ENCODE measurements at regions of chr3 and their contacts with region 1.

Region 1: GRCh38 chr3:12994607-12995388 is 78.4 kb downstream of the IQSEC1 start:
- DNase-seq: peak; percentile 92
- CTCF ChIP-seq: peak; percentile 91

Region 2: GRCh38 chr3:12959838-12960378 is 34.9 kb before region 1 on chr3:
- CTCF ChIA-PET with region 1: interaction called, 163 read pairs
- POLR2A ChIA-PET with region 1: no interaction called
- DNase-seq: no peak
- CTCF ChIP-seq: no peak

Region 3: DNA sequence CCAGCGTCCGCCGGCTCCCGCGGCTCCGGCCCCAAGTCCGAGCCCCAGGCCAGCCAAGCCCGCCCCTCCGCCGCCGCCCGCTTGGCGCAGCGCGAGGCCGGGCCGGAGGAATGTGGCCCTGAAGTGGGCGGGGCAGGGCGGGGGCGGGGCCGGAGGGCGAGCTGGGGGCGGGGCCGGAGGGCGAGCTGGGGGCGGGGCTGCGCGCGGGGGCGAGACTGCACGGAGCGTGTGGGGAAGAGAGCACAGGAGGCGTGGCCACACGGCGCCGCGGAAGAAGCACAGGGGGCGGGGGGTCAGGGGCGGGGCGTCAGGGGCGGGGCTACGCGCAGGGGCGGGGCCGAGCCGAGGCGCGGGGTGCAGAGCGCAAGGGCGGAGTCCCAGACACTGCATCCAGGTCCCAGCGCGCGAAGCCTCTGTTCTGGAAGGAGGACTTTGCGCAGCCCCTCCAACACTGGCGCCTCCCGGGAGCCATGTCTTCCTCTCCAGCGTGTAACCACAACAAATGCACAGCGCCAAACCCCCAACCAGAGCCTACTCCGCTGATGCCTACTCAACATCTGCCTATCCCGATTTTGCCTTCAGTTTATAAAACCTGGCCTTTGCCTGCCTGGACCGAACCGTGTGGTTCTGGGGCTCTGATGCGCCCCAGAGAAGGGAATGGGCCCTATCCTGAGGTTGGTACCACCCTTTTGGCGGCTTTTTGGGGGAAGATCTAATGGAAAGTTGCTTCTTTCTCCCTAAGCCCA is 27.0 kb before region 1 on chr3:
- CTCF ChIA-PET with region 1: interaction called, 163 read pairs
- POLR2A ChIA-PET with region 1: no interaction called
- DNase-seq: peak; percentile 100
- CTCF ChIP-seq: no peak

Region 4: GRCh38 chr3:12977117-12977808 is 17.5 kb before region 1 on chr3:
- CTCF ChIA-PET with region 1: interaction called, 163 read pairs
- POLR2A ChIA-PET with region 1: no interaction called
- DNase-seq: no peak
- CTCF ChIP-seq: no peak

Region 5: GRCh38 chr3:12984023-12984823 is 10.6 kb before region 1 on chr3:
- CTCF ChIA-PET with region 1: interaction called, 131 read pairs
- POLR2A ChIA-PET with region 1: no interaction called
- DNase-seq: peak; percentile 73
- CTCF ChIP-seq: peak; percentile 65

Region 6: DNA sequence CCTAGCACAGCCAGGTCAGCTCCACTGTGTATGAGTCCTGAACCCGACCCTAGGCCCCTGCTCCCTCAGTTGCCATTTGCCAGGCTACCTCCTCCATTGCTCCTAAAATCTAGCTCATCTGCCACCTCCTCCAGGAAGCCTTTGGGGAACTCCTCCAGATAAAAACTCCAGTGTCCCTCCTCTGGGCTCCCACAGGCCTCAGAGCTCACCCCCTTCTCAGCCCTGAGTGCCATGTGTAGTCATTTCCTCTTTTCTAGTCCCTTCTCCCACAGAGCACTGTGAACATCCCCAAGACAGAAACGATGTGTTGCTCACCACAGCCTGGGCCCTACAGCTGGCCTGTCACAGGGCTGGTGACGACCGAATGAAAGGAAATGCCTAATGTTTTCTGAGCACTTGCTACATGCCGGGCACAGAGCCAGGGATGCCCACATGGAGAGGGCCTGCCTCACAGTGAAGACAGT is 17.5 kb after region 1 on chr3:
- CTCF ChIA-PET with region 1: interaction called, 63 read pairs
- POLR2A ChIA-PET with region 1: interaction called, 3 read pairs
- DNase-seq: peak; percentile 65
- CTCF ChIP-seq: no peak

Region 7: DNA sequence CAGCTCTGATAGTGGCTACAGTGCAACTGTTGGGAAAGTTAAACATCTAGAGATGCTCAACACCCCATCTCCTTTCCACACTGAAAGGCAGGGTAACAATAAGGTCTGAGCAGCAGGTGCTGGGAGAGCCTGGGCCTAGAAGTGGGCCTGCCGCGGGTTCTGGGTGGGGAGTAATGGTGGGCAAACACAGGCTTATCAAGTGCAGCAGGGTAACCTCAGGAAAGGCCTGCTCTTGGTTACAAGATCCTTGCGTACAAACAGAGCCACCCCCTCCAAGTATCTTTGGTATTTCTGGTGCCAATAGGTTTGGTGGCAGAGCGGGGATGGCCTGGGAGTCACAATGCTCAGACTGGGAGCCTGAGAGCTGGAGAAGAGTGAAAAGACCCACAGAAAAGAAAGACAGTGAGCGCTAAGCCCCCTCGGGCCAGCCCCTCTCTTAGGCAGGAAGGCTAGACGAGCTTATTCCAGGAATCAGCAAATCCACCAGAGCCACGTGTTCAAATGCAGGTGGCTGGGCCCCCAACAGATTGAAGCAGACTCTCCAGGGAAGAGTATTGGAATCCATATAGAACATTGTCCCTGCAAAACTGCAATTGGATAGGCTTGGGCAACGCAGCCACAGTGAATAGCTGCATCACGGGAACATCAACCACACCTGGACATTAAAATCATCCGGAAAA is 75.7 kb after region 1 on chr3:
- CTCF ChIA-PET with region 1: no interaction called
- POLR2A ChIA-PET with region 1: no interaction called
- DNase-seq: no peak
- CTCF ChIP-seq: no peak

Measured in GM10248 (cell line).